T-cell (primary cell): ENCODE measurements at regions of chr1 and their contacts with region 1.

Region 1: GRCh38 chr1:185170291-185170848 is 13.4 kb downstream of the SWT1 start:
- DNase-seq: peak in 31 of 35 experiments; percentile 1 to 72 (median 21)
- ATAC-seq: peak; percentile 82 to 87 (median 84)
- H3K4me3 ChIP-seq: no peak overlapping the region
- H3K4me3 Mint-ChIP-seq: no peak overlapping the region
- H3K27ac ChIP-seq: no peak overlapping the region
- H3K27ac Mint-ChIP-seq: no peak overlapping the region
- H3K4me1 ChIP-seq: peaks cover 0 to 3% of the 10 kb centered on the region in 2 experiments
- H3K4me1 Mint-ChIP-seq: peaks cover 4 to 7% (median 5%) of the 10 kb centered on the region in 3 donors
- H3K27me3 ChIP-seq: no peaks in the 10 kb centered on the region
- H3K27me3 Mint-ChIP-seq: no peaks in the 10 kb centered on the region

Region 2: GRCh38 chr1:185054365-185055056 is 115.9 kb before region 1 on chr1:
- CTCF ChIA-PET with region 1: no interaction called
- POLR2A ChIA-PET with region 1: no interaction called
- DNase-seq: no peak
- ATAC-seq: no peak
- H3K4me3 ChIP-seq: no peak overlapping the region
- H3K4me3 Mint-ChIP-seq: no peak overlapping the region
- H3K27ac ChIP-seq: no peak overlapping the region
- H3K27ac Mint-ChIP-seq: no peak overlapping the region
- H3K4me1 ChIP-seq: peaks cover 0 to 3% of the 10 kb centered on the region in 2 experiments
- H3K4me1 Mint-ChIP-seq: peaks cover 63 to 72% (median 64%) of the 10 kb centered on the region in 3 donors
- H3K27me3 ChIP-seq: no peaks in the 10 kb centered on the region
- H3K27me3 Mint-ChIP-seq: no peaks in the 10 kb centered on the region

Region 3: DNA sequence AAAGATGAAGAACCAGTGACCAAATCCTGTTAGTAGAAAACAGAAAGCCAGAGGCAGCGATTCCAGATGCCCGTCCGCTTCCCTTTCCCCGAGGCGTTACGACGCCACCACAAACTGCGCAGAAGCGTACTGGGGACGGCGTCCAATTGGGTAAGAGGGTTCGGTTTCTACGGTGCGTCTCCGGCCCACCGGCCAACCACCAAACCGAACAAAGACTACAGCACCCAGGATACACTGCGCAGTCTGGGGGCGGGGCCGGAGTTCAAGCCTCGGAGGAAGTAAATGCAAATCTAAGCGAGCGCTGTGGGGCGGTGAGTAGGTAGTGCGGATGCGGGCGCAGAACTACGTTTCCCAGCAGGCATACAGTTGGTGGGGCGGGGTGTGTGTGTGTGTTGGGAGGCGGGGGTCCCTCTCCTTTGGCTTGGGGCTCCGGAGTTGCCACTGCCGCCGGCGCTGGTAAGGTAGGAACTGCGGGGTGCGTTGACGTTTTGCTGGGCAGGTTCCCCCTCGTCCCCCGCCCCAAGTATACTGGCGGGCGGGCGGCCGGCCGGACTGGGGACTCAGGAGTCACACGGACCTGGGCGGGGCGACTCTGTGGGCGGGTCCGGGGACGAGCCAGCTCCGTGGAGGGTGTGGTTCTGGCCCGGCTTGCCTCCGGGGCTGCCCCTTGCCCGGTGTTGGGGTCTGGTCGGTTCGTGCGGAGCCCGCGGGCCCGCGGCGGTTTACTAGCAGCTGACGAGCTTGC is 13.3 kb before region 1 on chr1 and contains the starts of genes SWT1 and TRMT1L:
- CTCF ChIA-PET with region 1: interaction called, 11 to 28 read pairs
- POLR2A ChIA-PET with region 1: interaction called, 3 to 7 read pairs
- DNase-seq: peak; percentile 95 to 99 (median 97)
- ATAC-seq: peak; percentile 91 to 94 (median 91)
- H3K4me3 ChIP-seq: peak within 1 kb of the TSS; percentile 97 to 99
- H3K4me3 Mint-ChIP-seq: peak within 1 kb of the TSS; percentile 98 to 100 (median 98)
- H3K27ac ChIP-seq: peak within 1 kb of the TSS; percentile 99
- H3K27ac Mint-ChIP-seq: peak within 1 kb of the TSS; percentile 97 to 99
- H3K4me1 ChIP-seq: peaks cover 11 to 25% of the 10 kb centered on the region in 2 experiments
- H3K4me1 Mint-ChIP-seq: peaks cover 50 to 53% (median 53%) of the 10 kb centered on the region in 3 donors
- H3K27me3 ChIP-seq: no peaks in the 10 kb centered on the region
- H3K27me3 Mint-ChIP-seq: no peaks in the 10 kb centered on the region
- total RNA-seq, gene SWT1: 6.4 to 9.8 (median 8.5) TPM
- total RNA-seq, gene TRMT1L: 6.2 to 23.4 (median 22.1) TPM

Region 4: GRCh38 chr1:185232874-185233273 is 62.5 kb after region 1 on chr1:
- CTCF ChIA-PET with region 1: no interaction called
- POLR2A ChIA-PET with region 1: no interaction called
- DNase-seq: no peak
- ATAC-seq: no peak
- H3K4me3 ChIP-seq: no peak overlapping the region
- H3K4me3 Mint-ChIP-seq: no peak overlapping the region
- H3K27ac ChIP-seq: no peak overlapping the region
- H3K27ac Mint-ChIP-seq: no peak overlapping the region
- H3K4me1 ChIP-seq: no peaks in the 10 kb centered on the region
- H3K4me1 Mint-ChIP-seq: peaks cover 0 to 2% (median 0%) of the 10 kb centered on the region in 3 donors
- H3K27me3 ChIP-seq: no peaks in the 10 kb centered on the region
- H3K27me3 Mint-ChIP-seq: no peaks in the 10 kb centered on the region

Region 5: GRCh38 chr1:185670187-185670627 is 499.8 kb after region 1 on chr1:
- CTCF ChIA-PET with region 1: interaction called, 3 to 11 read pairs
- POLR2A ChIA-PET with region 1: no interaction called
- DNase-seq: peak; percentile 19 to 76 (median 56)
- ATAC-seq: peak; percentile 66 to 84 (median 75)
- H3K4me3 ChIP-seq: no peak overlapping the region
- H3K4me3 Mint-ChIP-seq: no peak overlapping the region
- H3K27ac ChIP-seq: peak overlapping the region; percentile 15
- H3K27ac Mint-ChIP-seq: peak overlapping the region; percentile 40 to 50
- H3K4me1 ChIP-seq: peaks cover 11 to 17% of the 10 kb centered on the region in 2 experiments
- H3K4me1 Mint-ChIP-seq: peaks cover 32 to 34% (median 34%) of the 10 kb centered on the region in 3 donors
- H3K27me3 ChIP-seq: no peaks in the 10 kb centered on the region
- H3K27me3 Mint-ChIP-seq: no peaks in the 10 kb centered on the region